ENCODE measurements at regions of chr5 and their contacts with region 1.

Region 1: DNA sequence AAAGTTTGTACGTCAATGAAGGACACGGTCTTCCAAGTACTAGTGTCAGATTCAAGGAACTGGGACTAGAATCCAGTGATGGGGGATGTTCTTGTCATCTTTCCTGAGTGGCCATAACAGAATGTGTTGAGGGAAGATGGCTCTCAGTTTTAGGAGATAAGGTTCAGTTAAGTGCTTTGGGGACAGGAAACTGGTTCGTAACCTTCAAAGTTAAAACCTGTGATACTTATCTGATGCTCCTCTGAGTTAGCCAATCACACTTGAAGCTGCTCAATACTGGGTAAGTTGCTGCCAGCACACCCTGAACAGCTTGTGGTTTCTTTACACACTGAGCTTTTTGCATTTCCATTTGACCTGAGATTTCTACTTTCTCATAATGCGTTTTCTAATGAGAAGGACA is 64.4 kb downstream of the PIK3R1 start:
- DNase-seq: peak in 8 of 9 donors; percentile 32 to 84 (median 80)
- ATAC-seq: peak; percentile 94
- H3K4me3 ChIP-seq: peak overlapping the region; percentile 63
- H3K4me3 Mint-ChIP-seq: peak overlapping the region; percentile 84 to 95 (median 90)
- H3K27ac ChIP-seq: peak overlapping the region; percentile 70
- H3K27ac Mint-ChIP-seq: peak overlapping the region; percentile 94 to 98 (median 97)
- H3K4me1 ChIP-seq: peaks cover 59 to 65% of the 10 kb centered on the region in 2 donors
- H3K4me1 Mint-ChIP-seq: peaks cover 39 to 94% (median 81%) of the 10 kb centered on the region in 7 donors
- H3K27me3 ChIP-seq: no peaks in the 10 kb centered on the region
- H3K27me3 Mint-ChIP-seq: no peaks in the 10 kb centered on the region

Region 2: DNA sequence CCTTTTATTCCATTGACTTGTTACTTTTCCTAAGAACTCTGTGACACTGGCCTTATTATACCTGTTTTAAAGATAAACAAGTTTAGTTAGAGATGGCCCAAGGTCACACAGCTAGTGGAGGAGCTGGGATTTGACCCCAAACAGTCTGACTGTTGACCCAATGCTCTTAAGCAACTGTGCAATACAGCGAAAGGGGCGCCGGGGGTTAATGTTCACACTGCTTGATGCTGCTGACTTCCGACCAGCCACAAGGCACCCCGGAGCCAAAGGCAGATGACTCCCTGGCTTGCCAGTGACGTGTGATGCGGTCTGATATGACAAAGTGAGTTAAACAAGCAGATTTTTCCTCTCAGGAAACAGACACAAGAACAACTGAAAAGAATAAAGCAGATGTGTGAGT is 40.5 kb before region 1 on chr5:
- CTCF ChIA-PET with region 1: no interaction called
- POLR2A ChIA-PET with region 1: interaction called, 3 read pairs
- intact Hi-C with region 1: loop called in 1 of 2 experiments (anchors 2 kb)
- DNase-seq: peak; percentile 50 to 91 (median 86)
- ATAC-seq: peak; percentile 98
- H3K4me3 ChIP-seq: no peak overlapping the region
- H3K4me3 Mint-ChIP-seq: peak overlapping the region; percentile 11 to 84 (median 70)
- H3K27ac ChIP-seq: peak overlapping the region; percentile 70
- H3K27ac Mint-ChIP-seq: peak overlapping the region; percentile 69 to 98 (median 87)
- H3K4me1 ChIP-seq: peaks cover 41 to 51% of the 10 kb centered on the region in 2 donors
- H3K4me1 Mint-ChIP-seq: peaks cover 52 to 93% (median 90%) of the 10 kb centered on the region in 7 donors
- H3K27me3 ChIP-seq: no peaks in the 10 kb centered on the region
- H3K27me3 Mint-ChIP-seq: no peaks in the 10 kb centered on the region

Region 3: GRCh38 chr5:68260467-68260866 is 19.5 kb before region 1 on chr5:
- CTCF ChIA-PET with region 1: interaction called, 5 read pairs
- POLR2A ChIA-PET with region 1: interaction called, 12 read pairs
- intact Hi-C with region 1: loop called in 1 of 2 experiments (anchors 2 kb)
- DNase-seq: no peak
- ATAC-seq: no peak
- H3K4me3 ChIP-seq: no peak overlapping the region
- H3K4me3 Mint-ChIP-seq: peak overlapping the region in 3 of 10 donors; percentile 16 to 76 (median 19)
- H3K27ac ChIP-seq: no peak overlapping the region
- H3K27ac Mint-ChIP-seq: peak overlapping the region in 8 of 9 donors; percentile 23 to 95 (median 76)
- H3K4me1 ChIP-seq: peaks cover 64 to 81% of the 10 kb centered on the region in 2 donors
- H3K4me1 Mint-ChIP-seq: peaks cover 53 to 91% (median 90%) of the 10 kb centered on the region in 7 donors
- H3K27me3 ChIP-seq: no peaks in the 10 kb centered on the region
- H3K27me3 Mint-ChIP-seq: no peaks in the 10 kb centered on the region